Activated CD4-positive, alpha-beta T cell treated with anti-CD3 and anti-CD28 coated beads, Interleukin-2, amount 10 ng/mL, durations not matched to agents 24 days and 14 days (primary cell): ENCODE measurements at regions of chr3 and their contacts with region 1.

Region 1: GRCh38 chr3:58217209-58217811 is 6.5 kb upstream of the DNASE1L3 start:
- DNase-seq: peak; percentile 87
- H3K4me3 Mint-ChIP-seq: no peak overlapping the region
- H3K27ac Mint-ChIP-seq: no peak overlapping the region
- H3K4me1 Mint-ChIP-seq: peaks cover 15% of the 10 kb centered on the region
- H3K27me3 Mint-ChIP-seq: peaks cover 3% of the 10 kb centered on the region

Region 2: GRCh38 chr3:58008140-58009025 is 208.9 kb before region 1 on chr3 and contains the start of gene FLNB:
- intact Hi-C with region 1: loop called (anchors 2 kb)
- DNase-seq: peak; percentile 93
- H3K4me3 Mint-ChIP-seq: peak within 1 kb of the TSS; percentile 91
- H3K27ac Mint-ChIP-seq: peak within 1 kb of the TSS; percentile 87
- H3K4me1 Mint-ChIP-seq: peaks cover 33% of the 10 kb centered on the region
- H3K27me3 Mint-ChIP-seq: no peaks in the 10 kb centered on the region
- total RNA-seq, gene FLNB: 22.8 and 23.9 TPM in 2 replicates

Region 3: DNA sequence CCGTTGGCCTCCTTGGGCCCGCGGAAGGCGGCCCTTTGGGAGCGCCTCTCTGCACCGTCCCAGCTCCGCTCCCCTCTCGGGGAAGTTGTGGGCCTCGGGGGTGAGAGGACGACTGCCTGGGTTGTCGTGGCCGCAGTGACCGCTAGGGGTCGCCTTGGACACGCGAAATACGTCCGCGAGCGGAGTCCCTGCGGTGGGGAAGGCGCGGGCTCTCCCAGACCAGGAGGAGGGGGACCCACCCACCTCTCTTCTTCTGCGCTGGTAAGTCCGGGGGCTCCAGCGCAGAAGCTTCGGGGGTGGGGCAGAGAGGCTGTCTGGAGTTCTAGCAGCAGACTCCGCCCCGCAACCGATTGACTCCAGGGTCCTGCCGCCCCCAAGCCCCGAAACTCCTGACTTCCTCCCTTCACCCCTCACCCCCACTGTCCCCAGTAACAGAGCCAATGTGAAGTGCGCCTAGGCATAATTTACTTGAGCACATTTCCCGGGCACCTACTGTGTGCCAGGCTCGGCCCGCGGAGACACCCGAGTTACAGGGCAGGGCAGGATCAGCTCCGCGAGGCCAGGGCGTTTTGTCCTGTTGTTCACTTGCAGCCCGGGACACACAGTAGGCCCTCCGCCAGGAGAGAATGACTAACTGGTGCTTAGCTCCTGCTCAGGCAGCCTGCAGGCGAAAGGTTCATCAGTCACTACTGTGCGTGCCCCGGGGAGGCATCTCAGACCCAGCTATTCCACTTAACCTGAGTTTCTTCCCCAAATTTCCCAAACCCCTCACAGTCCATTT is 39.4 kb before region 1 on chr3:
- intact Hi-C with region 1: loop called (anchors 1 kb)
- DNase-seq: peak; percentile 97
- H3K4me3 Mint-ChIP-seq: peak overlapping the region; percentile 81
- H3K27ac Mint-ChIP-seq: no peak overlapping the region
- H3K4me1 Mint-ChIP-seq: peaks cover 15% of the 10 kb centered on the region
- H3K27me3 Mint-ChIP-seq: peaks cover 9% of the 10 kb centered on the region

Region 4: DNA sequence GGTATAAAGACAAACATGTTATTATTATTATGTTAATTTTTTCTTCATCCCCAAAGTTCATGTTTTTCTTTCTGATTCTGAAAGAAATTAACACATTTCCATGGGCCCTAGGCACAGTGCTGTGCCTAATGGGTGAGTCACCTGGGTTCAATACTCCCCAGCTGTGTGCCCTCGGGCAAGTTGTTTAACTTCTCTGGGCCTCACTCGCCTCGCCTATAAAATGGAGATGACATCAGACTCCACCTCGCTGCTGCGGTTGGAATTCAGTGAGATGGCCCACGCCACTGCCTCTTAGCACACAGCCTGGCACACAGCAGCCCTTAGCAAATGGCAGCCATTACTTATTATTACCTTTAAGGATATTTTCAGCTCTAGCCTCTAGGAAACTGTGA is 29.1 kb before region 1 on chr3:
- intact Hi-C with region 1: loop called (anchors 1 kb)
- DNase-seq: no peak
- H3K4me3 Mint-ChIP-seq: no peak overlapping the region
- H3K27ac Mint-ChIP-seq: no peak overlapping the region
- H3K4me1 Mint-ChIP-seq: no peaks in the 10 kb centered on the region
- H3K27me3 Mint-ChIP-seq: peaks cover 2% of the 10 kb centered on the region

Region 5: DNA sequence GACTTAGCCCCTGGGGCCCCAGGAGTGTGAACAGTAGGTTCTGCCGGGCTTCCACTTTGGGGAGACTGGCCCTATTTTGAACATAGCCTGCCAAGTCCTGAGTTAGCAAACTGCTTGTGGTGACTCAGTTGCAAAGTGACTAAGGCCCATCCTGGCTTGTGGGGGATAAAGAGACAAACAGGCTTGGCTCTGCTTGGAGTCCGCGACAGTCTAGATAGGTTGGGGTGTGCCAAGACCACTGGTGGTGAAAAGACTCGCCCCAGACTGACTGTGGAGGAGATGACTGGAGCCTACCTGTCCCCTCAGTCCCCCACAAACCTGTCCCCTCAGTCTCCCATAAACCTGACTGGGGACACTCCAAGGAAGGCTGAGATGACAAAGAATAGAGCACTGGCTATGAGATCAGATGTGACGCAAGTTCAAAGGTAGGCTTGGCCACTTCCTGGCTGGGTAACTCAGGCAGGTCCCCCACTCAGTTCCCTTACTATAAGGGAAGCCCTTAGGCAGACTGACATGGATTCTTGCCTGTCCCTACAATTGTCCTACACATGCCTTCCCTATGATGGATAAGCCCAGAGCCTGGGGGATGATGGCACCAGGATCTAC is 10.8 kb before region 1 on chr3:
- intact Hi-C with region 1: loop called (anchors 1 kb)
- DNase-seq: peak; percentile 71
- H3K4me3 Mint-ChIP-seq: no peak overlapping the region
- H3K27ac Mint-ChIP-seq: peak overlapping the region; percentile 59
- H3K4me1 Mint-ChIP-seq: peaks cover 11% of the 10 kb centered on the region
- H3K27me3 Mint-ChIP-seq: peaks cover 14% of the 10 kb centered on the region

Region 6: DNA sequence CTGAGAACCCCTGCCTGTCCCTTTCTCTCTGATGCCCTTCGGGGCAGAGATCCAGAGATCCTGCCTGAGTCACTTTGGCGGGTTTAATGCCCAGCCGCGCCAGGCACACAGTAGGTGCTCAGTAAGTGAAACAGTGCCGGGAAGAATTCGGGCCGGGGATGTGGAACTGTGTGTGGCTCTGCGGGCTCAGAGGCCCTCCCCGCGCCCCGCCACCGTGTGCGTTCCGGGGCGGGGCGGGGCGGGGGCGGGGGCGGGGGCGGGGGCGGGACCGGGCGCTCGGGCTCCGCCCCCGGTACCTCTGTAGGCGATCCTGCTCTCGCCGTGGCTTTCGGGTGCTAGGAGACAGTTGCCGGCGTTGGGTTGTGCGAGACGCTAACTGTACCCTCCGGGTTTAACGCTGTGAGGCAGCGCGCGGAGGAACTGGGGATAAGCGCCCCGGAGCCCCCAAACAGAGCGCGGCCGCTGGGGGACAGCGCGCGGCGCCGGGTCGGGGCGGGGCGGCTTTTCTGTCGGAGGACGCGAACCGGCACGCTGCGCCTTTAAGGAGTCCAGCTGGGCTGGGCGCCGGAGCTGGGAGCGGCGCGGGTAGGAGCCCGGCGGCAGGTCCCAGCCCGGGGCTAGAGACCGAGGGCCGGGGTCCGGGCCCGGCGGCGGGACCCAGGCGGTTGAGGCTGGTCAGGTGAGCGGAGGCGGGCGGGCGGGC is 20.1 kb after region 1 on chr3 and contains the start of gene ABHD6:
- intact Hi-C with region 1: loop called (anchors 2 kb)
- DNase-seq: peak; percentile 95
- H3K4me3 Mint-ChIP-seq: peak within 1 kb of the TSS; percentile 94
- H3K27ac Mint-ChIP-seq: peak within 1 kb of the TSS; percentile 83
- H3K4me1 Mint-ChIP-seq: peaks cover 15% of the 10 kb centered on the region
- H3K27me3 Mint-ChIP-seq: peaks cover 27% of the 10 kb centered on the region
- total RNA-seq, gene ABHD6: 9.8 and 10.8 TPM in 2 replicates

Region 7: GRCh38 chr3:58271901-58272501 is 54.7 kb after region 1 on chr3:
- intact Hi-C with region 1: no loop called
- DNase-seq: no peak
- H3K4me3 Mint-ChIP-seq: no peak overlapping the region
- H3K27ac Mint-ChIP-seq: no peak overlapping the region
- H3K4me1 Mint-ChIP-seq: peaks cover 10% of the 10 kb centered on the region
- H3K27me3 Mint-ChIP-seq: no peaks in the 10 kb centered on the region